Naive thymus-derived CD8-positive, alpha-beta T cell (primary cell): ENCODE measurements at regions of chr16 and their contacts with region 1.

Region 1: GRCh38 chr16:48385272-48386150 is at the start of gene SIAH1:
- DNase-seq: peak; percentile 80 to 95 (median 90)
- ATAC-seq: peak; percentile 78 to 83
- H3K4me3 Mint-ChIP-seq: peak within 1 kb of the TSS; percentile 87 to 99 (median 94)
- H3K27ac Mint-ChIP-seq: peak within 1 kb of the TSS; percentile 80 to 96 (median 92)
- H3K4me1 Mint-ChIP-seq: peaks cover 18 to 31% (median 24%) of the 10 kb centered on the region in 4 donors
- H3K27me3 Mint-ChIP-seq: no peaks in the 10 kb centered on the region
- polyA plus RNA-seq, gene SIAH1: 10.8 to 16.7 (median 12.0) TPM

Region 2: GRCh38 chr16:48365581-48366164 is 19.8 kb before region 1 on chr16:
- POLR2A ChIA-PET with region 1: interaction called, 12 read pairs
- DNase-seq: peak; percentile 56 to 83 (median 71)
- ATAC-seq: peak; percentile 85 to 93
- H3K4me3 Mint-ChIP-seq: peak overlapping the region; percentile 87 to 96 (median 90)
- H3K27ac Mint-ChIP-seq: peak overlapping the region; percentile 89 to 99 (median 94)
- H3K4me1 Mint-ChIP-seq: peaks cover 23 to 50% (median 38%) of the 10 kb centered on the region in 4 donors
- H3K27me3 Mint-ChIP-seq: no peaks in the 10 kb centered on the region

Region 3: GRCh38 chr16:48491517-48491916 is 106.0 kb after region 1 on chr16:
- POLR2A ChIA-PET with region 1: no interaction called
- DNase-seq: no peak
- ATAC-seq: no peak
- H3K4me3 Mint-ChIP-seq: no peak overlapping the region
- H3K27ac Mint-ChIP-seq: no peak overlapping the region
- H3K4me1 Mint-ChIP-seq: peaks cover 0 to 1% (median 0%) of the 10 kb centered on the region in 4 donors
- H3K27me3 Mint-ChIP-seq: peaks cover 0 to 12% (median 7%) of the 10 kb centered on the region in 5 donors